ENCODE measurements at regions of chr15 and their contacts with region 1.

Region 1: DNA sequence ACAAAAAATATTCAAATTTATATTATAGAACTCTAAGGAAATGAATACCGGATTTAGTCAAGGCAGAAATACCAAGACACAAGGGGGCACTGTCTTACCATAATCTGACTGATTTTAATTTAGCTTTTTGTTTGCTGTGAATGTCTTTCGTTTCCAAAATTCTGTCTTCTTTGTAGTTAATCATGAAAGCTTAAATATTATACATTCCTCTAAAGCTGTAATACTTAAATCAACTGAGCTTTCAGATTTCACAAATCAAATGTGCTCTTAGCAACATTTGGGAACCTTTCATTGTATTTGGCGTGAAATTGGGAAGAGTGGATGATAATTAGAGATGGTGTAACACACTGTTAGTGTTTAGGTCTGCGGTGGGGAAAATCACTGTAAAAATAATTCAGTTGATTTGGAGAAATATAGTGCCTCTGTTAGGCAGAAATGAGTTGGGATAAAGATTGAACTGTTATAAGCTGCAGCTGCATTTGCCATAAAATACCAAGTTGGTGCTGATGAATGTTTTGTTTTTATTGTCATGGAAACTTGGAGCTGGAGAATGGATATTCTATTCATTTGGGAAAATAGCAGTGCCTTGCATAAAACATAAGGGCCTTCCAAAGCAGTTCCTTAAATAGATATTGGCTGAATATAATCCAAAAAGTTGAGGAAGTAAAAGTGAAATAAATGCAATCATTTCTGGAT is 228.2 kb downstream of the TCF12 start:
- DNase-seq: no peak
- H3K4me3 ChIP-seq: no peak overlapping the region
- H3K27me3 ChIP-seq: no peaks in the 10 kb centered on the region
- CTCF ChIP-seq: peak; percentile 69

Region 2: GRCh38 chr15:56918046-56918938 is 228.4 kb before region 1 on chr15 and contains the start of gene TCF12:
- CTCF ChIA-PET with region 1: interaction called, 16 read pairs
- POLR2A ChIA-PET with region 1: no interaction called
- DNase-seq: peak; percentile 51
- H3K4me3 ChIP-seq: peak within 1 kb of the TSS; percentile 98
- H3K27me3 ChIP-seq: no peaks in the 10 kb centered on the region
- CTCF ChIP-seq: peak; percentile 56
- polyA plus RNA-seq, gene TCF12: 133 and 134 TPM in 2 replicates

Region 3: DNA sequence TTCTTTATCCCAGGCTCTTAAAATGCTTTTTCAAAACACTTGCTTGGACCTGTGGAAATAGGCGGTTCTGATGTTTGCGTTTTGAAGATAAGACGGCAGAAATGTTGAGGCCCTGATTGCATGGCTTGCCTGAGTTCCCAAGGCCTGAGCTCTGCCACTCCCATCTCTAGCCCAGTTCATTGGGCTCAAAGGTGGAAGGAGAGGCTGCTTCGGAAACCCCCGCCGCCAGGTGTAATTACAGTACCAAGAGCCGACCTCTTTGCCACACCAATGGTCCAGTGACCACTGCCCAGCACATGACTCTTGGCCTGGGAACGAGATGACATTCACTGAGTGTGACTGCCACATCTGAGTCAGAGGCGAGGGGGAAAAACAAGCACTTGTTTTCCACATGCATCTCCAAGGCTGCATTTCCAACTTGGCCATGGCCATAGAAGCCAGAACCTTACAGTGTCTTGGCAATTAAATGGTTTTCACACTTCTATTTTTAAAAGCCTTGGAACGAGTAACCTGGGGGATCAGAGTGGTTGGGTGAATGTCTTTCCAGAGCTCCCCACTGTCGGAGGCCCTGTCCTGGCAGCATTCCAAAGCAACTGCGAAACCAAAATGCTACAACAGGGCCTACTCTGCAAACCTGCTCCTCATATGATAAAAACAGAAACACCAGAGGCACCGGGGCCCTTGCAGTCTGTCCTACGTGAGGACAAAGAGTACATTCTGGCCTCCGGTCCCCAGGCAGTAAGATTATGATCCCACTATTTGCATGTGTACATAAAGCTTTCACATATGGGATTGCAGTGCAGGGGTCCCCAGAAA is 165.9 kb after region 1 on chr15:
- CTCF ChIA-PET with region 1: interaction called, 99 read pairs
- POLR2A ChIA-PET with region 1: no interaction called
- DNase-seq: no peak
- H3K4me3 ChIP-seq: no peak overlapping the region
- H3K27me3 ChIP-seq: no peaks in the 10 kb centered on the region
- CTCF ChIP-seq: no peak

Measured in BJ (cell line).